Activated CD4-positive, alpha-beta memory T cell treated with anti-CD3 and anti-CD28 coated beads for 36 hours (primary cell): ENCODE measurements at regions of chr18 and their contacts with region 1.

Region 1: DNA sequence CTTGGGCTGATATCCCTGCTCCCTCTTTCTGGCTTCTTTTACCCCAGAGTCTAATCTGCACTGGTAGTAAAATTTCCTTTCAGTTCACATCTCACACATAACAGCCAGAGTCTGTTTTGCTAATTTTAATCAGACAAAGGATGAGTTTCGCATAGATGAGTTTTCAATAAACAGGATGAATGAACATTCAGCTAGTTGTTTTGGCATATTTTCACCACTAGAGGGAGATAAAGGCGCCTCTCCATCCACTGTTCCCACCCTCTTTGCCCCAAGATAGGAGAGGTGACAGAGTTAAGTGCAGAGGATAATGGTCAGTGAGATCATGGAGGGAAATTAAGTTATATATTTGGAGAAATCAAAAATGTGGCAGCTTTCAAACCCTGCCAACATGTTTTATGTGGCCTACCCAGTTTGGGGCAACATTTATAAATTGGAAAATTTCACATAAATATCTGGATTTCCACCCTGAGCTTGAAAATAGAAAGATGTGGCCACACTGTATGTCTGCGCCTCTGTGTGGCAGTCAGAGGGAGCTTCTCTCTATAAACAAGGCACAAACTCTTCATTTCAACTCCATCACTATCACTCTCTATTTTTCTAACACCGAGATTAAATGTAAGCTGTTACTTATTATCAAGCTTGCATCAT is 48.5 kb upstream of the DTNA start:
- DNase-seq: no peak
- H3K4me3 Mint-ChIP-seq: no peak overlapping the region
- H3K27ac Mint-ChIP-seq: no peak overlapping the region
- H3K4me1 Mint-ChIP-seq: no peaks in the 10 kb centered on the region
- H3K27me3 Mint-ChIP-seq: peaks cover 12% of the 10 kb centered on the region

Region 2: GRCh38 chr18:34122724-34123334 is 538.8 kb before region 1 on chr18:
- CTCF ChIA-PET with region 1: interaction called, 10 read pairs
- POLR2A ChIA-PET with region 1: no interaction called
- intact Hi-C with region 1: no loop called
- DNase-seq: no peak
- H3K4me3 Mint-ChIP-seq: no peak overlapping the region
- H3K27ac Mint-ChIP-seq: no peak overlapping the region
- H3K4me1 Mint-ChIP-seq: no peaks in the 10 kb centered on the region
- H3K27me3 Mint-ChIP-seq: no peaks in the 10 kb centered on the region

Region 3: DNA sequence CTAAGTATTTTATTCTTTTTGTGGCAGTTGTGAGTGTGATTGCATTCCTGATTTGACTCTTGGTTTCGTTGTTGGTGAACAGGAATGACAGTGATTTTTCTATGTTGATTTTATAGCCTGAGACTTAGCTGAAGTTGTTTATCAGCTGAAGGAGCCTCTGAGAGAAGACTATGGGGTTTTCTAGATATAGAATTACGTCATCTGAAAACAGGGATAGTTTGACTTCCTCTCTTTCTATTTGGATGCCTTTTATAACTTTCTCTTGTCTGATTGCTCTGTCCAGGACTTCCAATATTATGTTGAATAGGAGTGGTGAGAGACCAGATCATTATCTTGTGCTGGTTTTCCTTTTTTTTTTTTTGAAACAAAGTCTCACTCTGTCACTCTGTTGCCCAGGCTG is 418.8 kb before region 1 on chr18:
- CTCF ChIA-PET with region 1: no interaction called
- POLR2A ChIA-PET with region 1: no interaction called
- intact Hi-C with region 1: no loop called
- DNase-seq: no peak
- H3K4me3 Mint-ChIP-seq: no peak overlapping the region
- H3K27ac Mint-ChIP-seq: no peak overlapping the region
- H3K4me1 Mint-ChIP-seq: no peaks in the 10 kb centered on the region
- H3K27me3 Mint-ChIP-seq: no peaks in the 10 kb centered on the region

Region 4: DNA sequence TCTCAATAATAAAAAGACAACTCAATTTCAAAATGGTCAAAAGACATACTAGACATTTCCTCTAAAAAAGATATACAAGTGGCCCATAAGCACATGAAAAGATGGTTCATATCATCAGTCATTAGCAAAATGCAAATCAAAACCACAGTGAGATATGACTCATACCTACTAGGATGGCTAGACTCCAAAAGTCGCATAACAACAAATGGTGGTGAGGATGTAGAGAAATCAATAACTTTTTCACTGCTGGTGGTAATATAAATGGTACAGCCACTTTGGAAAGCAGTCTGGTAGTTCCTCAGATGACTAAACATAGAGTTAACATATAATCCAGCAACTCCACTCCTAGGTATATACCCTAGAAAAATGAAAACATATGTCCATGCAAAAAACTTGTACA is 194.5 kb before region 1 on chr18:
- CTCF ChIA-PET with region 1: no interaction called
- POLR2A ChIA-PET with region 1: no interaction called
- intact Hi-C with region 1: no loop called
- DNase-seq: no peak
- H3K4me3 Mint-ChIP-seq: no peak overlapping the region
- H3K27ac Mint-ChIP-seq: no peak overlapping the region
- H3K4me1 Mint-ChIP-seq: no peaks in the 10 kb centered on the region
- H3K27me3 Mint-ChIP-seq: no peaks in the 10 kb centered on the region

Region 5: GRCh38 chr18:34637094-34637801 is 24.3 kb before region 1 on chr18:
- CTCF ChIA-PET with region 1: no interaction called
- POLR2A ChIA-PET with region 1: no interaction called
- intact Hi-C with region 1: no loop called
- DNase-seq: no peak
- H3K4me3 Mint-ChIP-seq: no peak overlapping the region
- H3K27ac Mint-ChIP-seq: no peak overlapping the region
- H3K4me1 Mint-ChIP-seq: no peaks in the 10 kb centered on the region
- H3K27me3 Mint-ChIP-seq: no peaks in the 10 kb centered on the region

Region 6: DNA sequence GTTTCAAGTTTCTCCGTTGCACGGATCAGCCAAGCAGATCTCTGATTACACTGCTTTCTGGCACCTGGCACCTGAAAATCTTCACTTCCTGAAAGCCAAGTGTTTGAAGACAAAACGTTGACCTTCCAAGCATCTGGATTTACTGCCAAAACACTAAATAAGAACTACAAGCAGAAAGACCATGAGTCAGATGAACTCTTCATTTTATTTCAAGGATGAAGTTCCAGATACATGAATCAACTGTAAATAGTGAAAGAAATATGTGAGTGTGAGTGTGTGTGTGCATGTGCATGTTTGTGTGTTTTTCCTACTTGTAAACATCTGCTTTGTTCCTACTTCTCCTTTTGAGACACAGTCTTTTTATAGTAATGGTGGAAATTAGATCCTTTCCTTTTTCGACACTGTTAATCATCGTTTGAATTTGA is 11.5 kb before region 1 on chr18:
- CTCF ChIA-PET with region 1: interaction called, 13 read pairs
- POLR2A ChIA-PET with region 1: no interaction called
- intact Hi-C with region 1: no loop called
- DNase-seq: no peak
- H3K4me3 Mint-ChIP-seq: no peak overlapping the region
- H3K27ac Mint-ChIP-seq: no peak overlapping the region
- H3K4me1 Mint-ChIP-seq: no peaks in the 10 kb centered on the region
- H3K27me3 Mint-ChIP-seq: peaks cover 5% of the 10 kb centered on the region

Region 7: GRCh38 chr18:34676816-34677574 is 15.4 kb after region 1 on chr18:
- CTCF ChIA-PET with region 1: interaction called, 11 read pairs
- POLR2A ChIA-PET with region 1: no interaction called
- intact Hi-C with region 1: no loop called
- DNase-seq: no peak
- H3K4me3 Mint-ChIP-seq: no peak overlapping the region
- H3K27ac Mint-ChIP-seq: no peak overlapping the region
- H3K4me1 Mint-ChIP-seq: no peaks in the 10 kb centered on the region
- H3K27me3 Mint-ChIP-seq: no peaks in the 10 kb centered on the region

Region 8: DNA sequence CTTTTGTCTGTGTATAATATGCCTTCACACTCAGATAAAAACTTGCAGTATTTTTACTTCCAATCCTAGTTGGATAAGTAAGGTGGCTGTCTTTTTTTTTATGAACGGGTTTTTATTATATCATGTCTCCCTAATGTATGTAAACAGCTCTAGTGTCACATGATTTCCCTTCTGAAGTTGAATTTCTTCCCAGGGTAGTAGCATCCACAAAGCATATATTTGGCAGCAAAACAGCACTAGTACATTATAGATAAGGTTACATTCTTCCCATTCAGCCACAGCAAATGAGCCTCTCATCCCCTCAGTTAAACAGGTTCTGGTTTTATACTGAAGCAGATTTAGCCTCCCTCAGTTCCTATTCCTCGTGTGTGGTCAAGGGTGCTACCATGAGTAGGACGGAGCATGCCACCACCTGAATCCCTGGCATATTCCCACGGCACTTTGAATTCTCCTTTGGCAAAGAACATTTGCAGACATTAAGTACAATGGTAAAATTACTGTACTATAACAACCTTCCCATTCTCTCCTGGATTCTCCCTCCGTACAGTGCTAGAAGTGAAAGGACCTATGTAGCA is 33.1 kb after region 1 on chr18:
- CTCF ChIA-PET with region 1: interaction called, 11 read pairs
- POLR2A ChIA-PET with region 1: no interaction called
- intact Hi-C with region 1: no loop called
- DNase-seq: no peak
- H3K4me3 Mint-ChIP-seq: no peak overlapping the region
- H3K27ac Mint-ChIP-seq: no peak overlapping the region
- H3K4me1 Mint-ChIP-seq: no peaks in the 10 kb centered on the region
- H3K27me3 Mint-ChIP-seq: no peaks in the 10 kb centered on the region

Region 9: DNA sequence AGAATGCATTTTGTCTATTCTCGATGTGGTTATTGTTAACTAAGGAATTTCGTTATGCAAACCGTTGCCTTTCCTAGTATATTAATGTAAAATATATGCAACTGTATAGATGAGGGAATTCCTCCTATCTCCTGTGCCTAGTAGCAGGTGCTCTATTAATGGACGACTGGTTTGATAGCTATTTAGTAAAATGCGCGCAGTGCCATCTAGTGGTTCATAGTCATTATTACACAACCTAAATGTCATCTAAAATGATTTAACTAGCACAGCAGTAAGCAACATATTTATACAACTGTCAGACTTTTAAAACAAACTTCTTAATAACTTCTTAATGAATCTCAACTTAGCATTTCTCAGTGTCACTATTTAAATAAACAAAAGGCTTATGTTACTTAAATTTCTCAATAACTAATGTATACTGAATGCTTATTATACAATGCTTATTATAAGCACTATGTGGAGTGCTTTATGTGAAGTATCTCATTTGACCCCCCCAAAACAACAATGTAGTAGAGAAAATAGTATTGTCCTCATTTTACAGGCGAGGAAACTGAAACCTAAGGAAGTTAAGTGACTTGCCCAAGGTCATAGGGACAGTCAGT is 126.4 kb after region 1 on chr18:
- CTCF ChIA-PET with region 1: interaction called, 48 read pairs
- POLR2A ChIA-PET with region 1: no interaction called
- intact Hi-C with region 1: loop called (anchors 1 kb)
- DNase-seq: no peak
- H3K4me3 Mint-ChIP-seq: no peak overlapping the region
- H3K27ac Mint-ChIP-seq: no peak overlapping the region
- H3K4me1 Mint-ChIP-seq: peaks cover 6% of the 10 kb centered on the region
- H3K27me3 Mint-ChIP-seq: peaks cover 11% of the 10 kb centered on the region